Activated B cell treated with CpG ODN at 0.5 μM for 24 hours (primary cell): ENCODE measurements at regions of chr12 and their contacts with region 1.

Region 1: GRCh38 chr12:63779498-63780481 is at the start of gene RXYLT1:
- DNase-seq: peak; percentile 82
- ATAC-seq: peak; percentile 93
- H3K4me3 Mint-ChIP-seq: peak within 1 kb of the TSS; percentile 98
- H3K27ac Mint-ChIP-seq: peak within 1 kb of the TSS; percentile 90
- H3K4me1 Mint-ChIP-seq: peaks cover 20% of the 10 kb centered on the region
- H3K27me3 Mint-ChIP-seq: no peaks in the 10 kb centered on the region
- CTCF ChIP-seq: no peak
- total RNA-seq, gene RXYLT1: 16.3 and 22.7 TPM in 2 replicates

Region 2: GRCh38 chr12:63764481-63764880 is 15.3 kb before region 1 on chr12:
- CTCF ChIA-PET with region 1: no interaction called
- POLR2A ChIA-PET with region 1: no interaction called
- intact Hi-C with region 1: no loop called
- DNase-seq: no peak
- ATAC-seq: no peak
- H3K4me3 Mint-ChIP-seq: no peak overlapping the region
- H3K27ac Mint-ChIP-seq: no peak overlapping the region
- H3K4me1 Mint-ChIP-seq: no peaks in the 10 kb centered on the region
- H3K27me3 Mint-ChIP-seq: peaks cover 6% of the 10 kb centered on the region
- CTCF ChIP-seq: no peak

Region 3: DNA sequence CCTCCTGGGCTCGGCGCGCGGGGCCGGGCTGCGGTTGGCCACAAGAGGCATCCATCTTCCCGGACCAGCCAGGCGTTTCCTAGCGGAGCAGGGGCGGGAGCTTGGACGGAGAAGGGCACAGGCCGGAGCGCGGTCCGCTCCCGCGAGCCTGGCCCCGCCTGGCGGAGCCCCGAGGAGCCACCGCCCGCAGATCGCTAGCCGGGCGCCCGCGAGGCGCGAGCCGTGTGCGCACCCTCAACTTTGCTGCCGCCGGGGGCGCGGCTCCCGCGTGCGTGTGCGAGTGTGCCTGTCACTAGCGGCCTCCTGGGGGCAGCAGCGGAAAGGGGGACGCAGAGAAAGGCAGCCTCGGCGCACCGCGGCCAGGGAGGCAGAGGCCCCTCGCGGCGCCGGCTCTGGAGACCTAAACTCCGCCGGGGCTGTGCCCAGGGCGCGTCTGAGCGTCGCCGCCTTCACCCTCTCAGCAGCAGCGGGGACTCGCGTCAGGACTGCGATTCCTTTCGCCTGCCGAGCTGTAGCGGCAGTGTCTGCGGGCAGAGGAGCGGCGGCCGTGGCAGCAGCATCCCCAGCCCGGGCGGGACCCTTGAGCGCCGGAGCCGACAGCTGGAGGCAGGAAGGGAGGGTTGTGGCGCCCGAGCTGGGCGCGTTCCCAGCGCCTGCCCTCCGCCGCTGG is 64.1 kb after region 1 on chr12:
- CTCF ChIA-PET with region 1: no interaction called
- POLR2A ChIA-PET with region 1: no interaction called
- intact Hi-C with region 1: loop called (anchors 1 kb)
- DNase-seq: peak; percentile 69
- ATAC-seq: peak; percentile 92
- H3K4me3 Mint-ChIP-seq: peak overlapping the region; percentile 74
- H3K27ac Mint-ChIP-seq: no peak overlapping the region
- H3K4me1 Mint-ChIP-seq: peaks cover 9% of the 10 kb centered on the region
- H3K27me3 Mint-ChIP-seq: peaks cover 24% of the 10 kb centered on the region
- CTCF ChIP-seq: peak; percentile 43

Region 4: DNA sequence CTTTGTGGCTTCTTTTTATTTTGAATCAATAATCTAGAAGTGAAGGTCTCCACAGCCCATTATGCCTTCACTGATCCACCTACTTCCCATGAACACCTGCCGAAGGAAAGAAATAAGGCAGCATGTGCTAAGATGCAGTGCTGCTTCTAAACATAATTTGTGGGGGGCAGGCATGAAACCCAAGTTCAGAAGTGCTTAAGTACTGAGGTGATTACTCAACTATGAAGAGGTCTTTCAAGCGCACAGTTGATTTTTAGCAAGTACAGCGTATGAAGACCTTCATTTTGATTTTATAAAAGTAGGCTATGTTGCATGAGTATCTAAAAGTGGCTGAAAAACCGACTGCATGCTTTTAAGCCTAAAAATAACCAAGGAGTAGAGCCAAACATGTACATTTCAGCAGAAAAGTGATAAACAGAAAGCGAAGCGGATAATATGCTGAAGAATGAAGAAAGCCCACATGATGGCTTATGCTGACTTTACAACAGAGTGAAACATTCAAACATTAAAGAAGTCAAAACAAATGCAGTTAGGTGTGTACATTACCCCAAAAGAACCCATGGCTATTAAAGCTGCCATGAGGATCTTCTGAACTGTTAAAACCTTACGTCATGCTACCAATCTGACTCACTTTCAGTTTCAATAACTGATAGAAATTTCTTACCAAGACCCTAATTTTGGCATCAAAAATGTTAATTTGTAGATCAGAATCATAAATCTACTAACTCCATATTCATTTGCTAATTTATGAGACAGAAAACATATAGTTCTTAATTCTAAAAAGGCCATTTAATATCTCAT is 413.1 kb after region 1 on chr12:
- CTCF ChIA-PET with region 1: no interaction called
- POLR2A ChIA-PET with region 1: no interaction called
- intact Hi-C with region 1: no loop called
- DNase-seq: no peak
- ATAC-seq: no peak
- H3K4me3 Mint-ChIP-seq: no peak overlapping the region
- H3K27ac Mint-ChIP-seq: no peak overlapping the region
- H3K4me1 Mint-ChIP-seq: peaks cover 8% of the 10 kb centered on the region
- H3K27me3 Mint-ChIP-seq: no peaks in the 10 kb centered on the region
- CTCF ChIP-seq: no peak

Region 5: GRCh38 chr12:64459394-64459891 is 679.7 kb after region 1 on chr12:
- CTCF ChIA-PET with region 1: no interaction called
- POLR2A ChIA-PET with region 1: no interaction called
- intact Hi-C with region 1: loop called (anchors 2 kb)
- DNase-seq: no peak
- ATAC-seq: peak; percentile 60
- H3K4me3 Mint-ChIP-seq: peak overlapping the region; percentile 77
- H3K27ac Mint-ChIP-seq: peak overlapping the region; percentile 83
- H3K4me1 Mint-ChIP-seq: peaks cover 35% of the 10 kb centered on the region
- H3K27me3 Mint-ChIP-seq: no peaks in the 10 kb centered on the region
- CTCF ChIP-seq: no peak